ENCODE measurements at regions of chr13 and their contacts with region 1.

Region 1: DNA sequence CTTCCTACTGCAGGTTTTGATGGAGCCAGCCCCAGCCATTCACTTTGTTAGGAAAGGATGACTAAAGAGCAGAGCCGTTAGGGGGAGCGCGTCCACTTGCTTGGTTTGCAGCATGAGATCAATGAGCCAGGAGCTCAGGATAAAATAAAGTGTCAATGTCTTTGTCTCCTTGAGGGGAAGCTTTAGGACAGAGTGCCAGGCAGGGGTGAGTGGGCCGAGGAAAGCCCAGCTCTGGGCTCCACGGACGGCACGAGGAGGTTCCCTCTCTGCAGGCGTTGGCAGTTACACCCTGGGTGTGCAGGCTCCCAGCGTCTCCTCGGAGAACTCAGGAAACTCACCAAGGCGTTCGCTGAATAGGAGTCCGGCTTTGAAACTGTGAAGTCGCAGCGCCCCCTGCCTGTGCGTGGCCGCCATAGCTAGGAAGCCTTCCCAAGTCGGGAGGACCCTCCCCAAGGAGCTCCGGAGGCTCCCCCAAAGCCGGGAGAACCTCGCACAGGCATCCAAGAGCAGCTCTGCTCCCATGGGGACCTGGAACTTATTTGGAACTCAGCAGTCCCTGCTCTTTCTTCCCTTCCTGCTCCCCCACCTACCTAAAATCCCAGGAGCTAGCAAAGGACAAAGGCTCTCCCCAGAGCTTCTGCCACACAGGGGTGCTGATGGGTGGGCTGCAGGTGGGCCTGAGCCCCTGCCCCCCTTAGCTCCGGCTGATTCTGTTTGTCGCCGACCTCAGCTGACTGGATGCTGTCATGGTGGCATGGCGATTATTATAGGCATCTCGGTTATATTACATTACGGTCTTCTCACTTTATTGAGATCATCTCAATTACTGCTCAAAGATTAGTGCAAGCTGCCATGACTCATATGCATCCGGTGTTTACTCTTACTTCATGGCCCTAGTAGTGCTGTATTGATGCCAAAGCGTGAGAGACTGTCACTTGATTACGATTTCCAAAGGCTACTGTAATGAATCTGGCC is 34.4 kb downstream of the GSX1 start:
- DNase-seq: peak; percentile 86
- H3K4me3 ChIP-seq: no peak overlapping the region
- H3K27ac ChIP-seq: no peak overlapping the region
- H3K4me1 ChIP-seq: peaks cover 8% of the 10 kb centered on the region
- H3K27me3 ChIP-seq: peaks cover 25% of the 10 kb centered on the region
- CTCF ChIP-seq: peak; percentile 93

Region 2: GRCh38 chr13:27533155-27533643 is 293.5 kb before region 1 on chr13:
- intact Hi-C with region 1: loop called (anchors 5 kb)
- DNase-seq: peak; percentile 87
- H3K4me3 ChIP-seq: peak overlapping the region; percentile 3
- H3K27ac ChIP-seq: no peak overlapping the region
- H3K4me1 ChIP-seq: no peaks in the 10 kb centered on the region
- H3K27me3 ChIP-seq: no peaks in the 10 kb centered on the region
- CTCF ChIP-seq: peak; percentile 88

Region 3: DNA sequence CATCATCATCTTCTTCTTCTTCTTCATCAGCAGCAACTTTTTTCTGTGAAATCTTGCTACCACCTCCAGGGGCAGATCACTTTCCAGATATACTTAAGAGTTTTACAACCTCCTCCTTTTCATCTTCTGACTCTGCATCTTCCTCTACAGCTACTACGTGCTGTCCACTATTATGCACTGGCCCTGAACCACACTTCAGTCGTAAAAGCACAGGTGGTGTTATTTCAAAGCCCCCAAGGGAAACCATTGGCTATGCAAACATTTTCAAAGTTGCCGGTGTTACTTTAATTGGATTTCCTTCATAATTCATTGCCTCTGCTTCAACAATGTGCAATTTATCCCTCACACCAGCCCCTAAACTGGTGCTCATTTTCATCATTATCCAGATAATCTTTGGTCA is 129.9 kb before region 1 on chr13:
- intact Hi-C with region 1: no loop called
- DNase-seq: no peak
- H3K4me3 ChIP-seq: no peak overlapping the region
- H3K27ac ChIP-seq: no peak overlapping the region
- H3K4me1 ChIP-seq: no peaks in the 10 kb centered on the region
- H3K27me3 ChIP-seq: no peaks in the 10 kb centered on the region
- CTCF ChIP-seq: no peak

Region 4: DNA sequence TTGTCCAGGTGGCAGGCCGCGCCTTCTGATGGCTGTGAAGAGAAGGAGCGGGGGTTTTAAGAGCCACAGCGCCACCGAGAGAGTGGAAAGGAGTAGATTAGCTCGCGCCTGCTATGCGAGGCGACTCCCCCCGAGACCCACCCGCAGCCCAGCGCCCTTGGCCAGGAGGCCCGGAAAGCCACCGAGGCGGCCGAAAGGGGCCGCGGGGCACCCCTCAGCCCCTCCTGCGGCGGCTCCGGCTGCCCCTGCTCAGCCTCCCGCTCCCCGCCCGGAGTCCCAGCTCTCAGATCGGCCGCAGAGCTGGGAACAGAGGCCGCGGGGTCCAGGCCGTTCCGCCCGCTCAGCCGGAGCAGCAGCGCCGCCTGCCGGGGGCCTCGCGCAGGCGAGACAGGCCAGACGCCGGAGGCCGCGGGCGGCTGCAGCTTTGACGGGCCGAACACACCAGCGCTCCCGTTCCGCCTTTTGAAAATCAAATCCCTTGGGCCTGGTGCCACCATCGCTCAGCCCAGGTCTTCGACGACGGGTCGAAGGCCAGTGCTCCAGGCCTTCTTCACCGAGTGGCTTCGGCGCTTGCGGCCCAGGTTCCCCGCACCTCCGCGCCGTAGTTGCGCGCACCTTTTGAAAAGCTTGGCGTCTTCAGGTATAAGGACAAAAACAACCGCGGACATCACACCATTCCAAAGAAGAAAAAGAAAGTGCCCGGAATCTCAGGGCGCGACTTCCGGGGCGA is 127.2 kb after region 1 on chr13:
- intact Hi-C with region 1: loop called (anchors 5 kb)
- DNase-seq: peak; percentile 82
- H3K4me3 ChIP-seq: peak overlapping the region; percentile 46
- H3K27ac ChIP-seq: peak overlapping the region; percentile 88
- H3K4me1 ChIP-seq: no peaks in the 10 kb centered on the region
- H3K27me3 ChIP-seq: peaks cover 5% of the 10 kb centered on the region
- CTCF ChIP-seq: peak; percentile 95

Region 5: DNA sequence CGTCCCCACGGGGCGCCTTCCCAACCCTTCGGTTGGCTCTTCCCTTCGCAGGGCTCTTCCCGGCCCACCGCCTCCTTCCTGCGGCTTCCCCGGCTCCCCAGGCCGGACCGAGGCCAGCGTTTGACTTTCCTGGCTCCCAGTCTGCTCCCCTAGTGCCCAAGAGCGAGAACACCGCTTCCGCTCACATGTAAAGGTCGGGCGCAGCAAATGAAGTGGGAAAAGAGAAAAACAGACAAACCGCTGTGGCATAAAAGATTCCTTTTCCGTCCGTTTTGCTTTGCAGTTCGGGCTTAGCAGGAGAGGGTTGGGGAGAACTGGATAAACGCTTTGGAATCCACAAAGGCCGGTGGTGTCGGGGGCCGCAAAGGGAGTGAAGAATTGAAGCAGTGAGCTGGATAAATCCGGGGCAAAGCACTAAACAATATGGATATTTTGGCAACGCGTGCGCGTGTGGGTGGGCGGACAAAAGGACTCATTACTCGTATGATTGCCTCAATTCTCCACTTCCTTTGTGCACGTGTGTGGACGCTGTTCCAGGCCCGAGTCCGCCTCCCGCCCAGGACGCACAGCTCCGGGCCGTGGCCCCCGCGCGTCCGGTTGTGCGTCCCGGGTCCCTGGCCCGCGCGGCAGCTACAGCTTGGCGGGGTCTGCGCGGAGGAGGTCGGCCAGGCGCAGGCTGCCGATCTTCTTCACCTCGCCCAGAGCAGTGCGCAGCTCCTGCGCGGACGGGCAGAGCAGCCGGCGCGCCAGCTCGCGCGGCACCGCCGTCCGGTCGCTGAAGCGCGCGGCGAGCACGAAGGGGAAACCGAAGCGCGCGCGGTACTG is 151.0 kb after region 1 on chr13:
- intact Hi-C with region 1: loop called (anchors 5 kb)
- DNase-seq: peak; percentile 28
- H3K4me3 ChIP-seq: peak overlapping the region; percentile 49
- H3K27ac ChIP-seq: peak overlapping the region; percentile 84
- H3K4me1 ChIP-seq: no peaks in the 10 kb centered on the region
- H3K27me3 ChIP-seq: peaks cover 22% of the 10 kb centered on the region
- CTCF ChIP-seq: no peak